AG04449 (cell line): ENCODE measurements at regions of chr19 and their contacts with region 1.

Region 1: GRCh38 chr19:40489882-40490230 is 23.1 kb downstream of the SPTBN4 start:
- DNase-seq: no peak
- H3K4me3 ChIP-seq: no peak overlapping the region
- CTCF ChIP-seq: no peak

Region 2: GRCh38 chr19:40444192-40445028 is 45.4 kb before region 1 on chr19 and contains the start of gene SERTAD3:
- CTCF ChIA-PET with region 1: no interaction called
- POLR2A ChIA-PET with region 1: no interaction called
- DNase-seq: peak; percentile 44
- H3K4me3 ChIP-seq: peak within 1 kb of the TSS; percentile 98
- CTCF ChIP-seq: no peak

Region 3: GRCh38 chr19:40502081-40502480 is 12.2 kb after region 1 on chr19:
- CTCF ChIA-PET with region 1: interaction called, 14 read pairs
- POLR2A ChIA-PET with region 1: no interaction called
- DNase-seq: no peak
- H3K4me3 ChIP-seq: no peak overlapping the region
- CTCF ChIP-seq: no peak